Pancreas (tissue), 10 donors: ENCODE measurements at regions of chr1 and their contacts with region 1.

Region 1: DNA sequence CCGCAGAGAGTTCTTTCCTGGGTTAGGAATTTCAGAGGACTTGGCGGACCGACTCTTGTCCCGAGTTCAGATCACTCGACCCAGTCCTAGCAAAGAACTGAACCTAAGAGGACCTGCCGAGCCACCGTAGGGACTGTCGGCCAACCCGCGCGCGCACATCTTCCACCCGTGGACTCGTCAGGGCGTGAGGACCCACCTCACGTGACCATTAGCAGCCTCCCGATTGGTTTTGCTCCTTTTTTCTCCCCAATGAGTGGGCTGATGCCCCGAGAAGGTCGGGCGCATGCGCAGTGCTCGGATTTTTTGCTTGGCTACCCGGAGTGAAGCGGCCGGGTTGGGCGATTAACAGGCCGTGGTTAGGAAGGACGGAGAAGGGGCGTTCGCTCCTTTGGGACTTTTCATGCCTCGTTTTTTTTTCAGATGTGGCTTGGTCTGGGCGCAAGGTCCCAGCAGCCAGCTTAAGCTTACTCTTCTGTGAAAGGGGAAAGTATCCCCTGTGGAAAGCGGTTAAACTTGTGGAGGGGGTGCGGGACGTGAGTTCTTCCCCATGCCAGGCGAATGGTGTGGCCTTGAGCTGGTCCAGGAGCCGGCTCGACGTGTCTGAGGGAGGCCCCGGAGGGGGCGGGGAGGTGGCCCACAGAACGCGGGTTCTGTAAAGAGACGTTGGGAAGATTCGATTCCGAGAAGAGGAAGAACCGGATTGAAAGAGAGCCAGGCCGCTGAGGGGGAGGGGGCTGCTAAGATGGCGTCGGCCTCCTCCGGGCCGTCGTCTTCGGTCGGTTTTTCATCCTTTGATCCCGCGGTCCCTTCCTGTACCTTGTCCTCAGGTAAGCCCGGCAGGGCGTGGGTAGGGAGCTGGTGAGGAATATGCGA is at the start of gene PIP5K1A:
- DNase-seq: peak; percentile 97 to 100 (median 99)
- ATAC-seq: peak; percentile 87 to 91 (median 89)
- H3K4me3 ChIP-seq: peak within 1 kb of the TSS; percentile 56 to 75 (median 65)
- H3K27ac ChIP-seq: peak within 1 kb of the TSS; percentile 66 to 93 (median 82)
- H3K4me1 ChIP-seq: peaks cover 7 to 23% (median 12%) of the 10 kb centered on the region in 3 donors
- H3K27me3 ChIP-seq: no peaks in the 10 kb centered on the region
- CTCF ChIP-seq: no peak
- total RNA-seq, gene PIP5K1A: 10.1 to 22.6 (median 15.3) TPM

Region 2: DNA sequence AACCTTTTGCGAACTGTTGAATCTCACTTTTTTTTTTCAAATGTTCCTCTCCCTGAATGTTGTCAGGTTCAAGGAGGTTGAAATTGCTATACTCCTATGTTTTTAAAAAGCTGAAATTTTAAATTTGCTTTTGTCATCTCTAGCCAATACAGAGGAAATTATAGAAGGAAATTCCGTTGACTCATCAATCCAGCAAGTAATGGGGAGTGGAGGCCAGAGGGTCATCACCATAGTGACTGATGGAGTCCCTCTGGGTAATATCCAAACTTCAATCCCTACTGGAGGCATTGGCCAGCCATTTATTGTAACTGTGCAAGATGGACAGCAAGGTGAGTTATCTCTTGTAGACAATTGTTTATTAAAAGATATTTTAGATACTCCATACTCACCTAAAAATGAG is 91.6 kb before region 1 on chr1:
- intact Hi-C with region 1: no loop called
- DNase-seq: no peak
- ATAC-seq: no peak
- H3K4me3 ChIP-seq: no peak overlapping the region
- H3K27ac ChIP-seq: no peak overlapping the region
- H3K4me1 ChIP-seq: no peaks in the 10 kb centered on the region
- H3K27me3 ChIP-seq: no peaks in the 10 kb centered on the region
- CTCF ChIP-seq: no peak

Region 3: GRCh38 chr1:151254217-151255213 is 56.0 kb after region 1 on chr1 and contains the start of gene PSMD4:
- intact Hi-C with region 1: loop called in 2 of 3 experiments (anchors 5 kb)
- DNase-seq: peak; percentile 90 to 97 (median 94)
- ATAC-seq: peak; percentile 98 to 99 (median 98)
- H3K4me3 ChIP-seq: peak within 1 kb of the TSS; percentile 68 to 91 (median 86)
- H3K27ac ChIP-seq: peak within 1 kb of the TSS; percentile 63 to 76 (median 71)
- H3K4me1 ChIP-seq: peaks cover 0 to 8% (median 0%) of the 10 kb centered on the region in 3 donors
- H3K27me3 ChIP-seq: no peaks in the 10 kb centered on the region
- CTCF ChIP-seq: no peak
- total RNA-seq, gene PSMD4: 53.7 to 83.6 (median 74.9) TPM

Region 4: DNA sequence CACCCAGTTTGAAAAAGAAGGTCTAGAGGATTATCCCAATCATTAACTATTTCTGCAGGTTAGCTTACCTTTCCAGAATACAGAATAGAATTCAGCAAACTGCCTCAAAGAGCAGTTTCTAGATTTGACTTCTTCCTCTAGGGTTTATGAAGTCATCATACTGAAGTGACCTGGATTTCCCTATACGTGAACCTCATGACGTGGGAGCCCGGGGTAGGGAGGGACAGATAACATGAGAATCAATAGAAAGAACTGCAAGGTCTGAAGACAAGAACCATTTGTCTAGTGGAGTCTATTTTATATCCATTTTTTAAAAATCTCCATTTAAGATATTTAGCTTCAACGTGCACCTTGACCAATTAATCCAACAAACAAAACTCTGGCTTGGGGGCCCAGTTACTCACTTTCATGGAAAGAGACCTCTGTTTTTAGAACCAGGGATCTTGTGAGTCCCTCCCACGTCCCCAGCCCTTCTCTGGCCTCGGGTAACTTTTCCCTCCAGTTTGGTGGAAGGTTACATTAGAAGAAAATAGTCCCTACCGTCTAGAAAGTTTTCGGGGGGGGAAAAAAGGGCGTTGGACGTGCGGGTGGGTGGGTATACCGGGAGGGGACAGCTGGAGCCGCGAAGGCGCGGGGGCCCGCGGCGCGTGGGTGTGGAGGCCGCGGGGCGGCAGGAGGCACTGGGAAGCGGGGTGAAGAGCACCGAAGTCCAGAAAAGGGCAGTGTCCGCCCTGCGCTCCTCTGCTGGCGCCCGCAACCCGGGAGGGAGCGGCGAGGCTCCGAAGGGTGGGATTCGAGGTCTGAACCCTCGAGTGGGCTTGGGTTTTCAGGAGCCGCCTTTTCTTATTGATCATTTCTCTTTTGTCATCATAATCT is 274.6 kb after region 1 on chr1:
- intact Hi-C with region 1: no loop called
- DNase-seq: peak in 5 of 6 donors; percentile 23 to 70 (median 43)
- ATAC-seq: peak; percentile 89 to 93 (median 90)
- H3K4me3 ChIP-seq: peak overlapping the region; percentile 33 to 63 (median 58)
- H3K27ac ChIP-seq: peak overlapping the region; percentile 73 to 82 (median 76)
- H3K4me1 ChIP-seq: peaks cover 0 to 5% (median 0%) of the 10 kb centered on the region in 3 donors
- H3K27me3 ChIP-seq: no peaks in the 10 kb centered on the region
- CTCF ChIP-seq: no peak